Aorta (tissue), 5 donors: ENCODE measurements at regions of chr1 and their contacts with region 1.

Region 1: DNA sequence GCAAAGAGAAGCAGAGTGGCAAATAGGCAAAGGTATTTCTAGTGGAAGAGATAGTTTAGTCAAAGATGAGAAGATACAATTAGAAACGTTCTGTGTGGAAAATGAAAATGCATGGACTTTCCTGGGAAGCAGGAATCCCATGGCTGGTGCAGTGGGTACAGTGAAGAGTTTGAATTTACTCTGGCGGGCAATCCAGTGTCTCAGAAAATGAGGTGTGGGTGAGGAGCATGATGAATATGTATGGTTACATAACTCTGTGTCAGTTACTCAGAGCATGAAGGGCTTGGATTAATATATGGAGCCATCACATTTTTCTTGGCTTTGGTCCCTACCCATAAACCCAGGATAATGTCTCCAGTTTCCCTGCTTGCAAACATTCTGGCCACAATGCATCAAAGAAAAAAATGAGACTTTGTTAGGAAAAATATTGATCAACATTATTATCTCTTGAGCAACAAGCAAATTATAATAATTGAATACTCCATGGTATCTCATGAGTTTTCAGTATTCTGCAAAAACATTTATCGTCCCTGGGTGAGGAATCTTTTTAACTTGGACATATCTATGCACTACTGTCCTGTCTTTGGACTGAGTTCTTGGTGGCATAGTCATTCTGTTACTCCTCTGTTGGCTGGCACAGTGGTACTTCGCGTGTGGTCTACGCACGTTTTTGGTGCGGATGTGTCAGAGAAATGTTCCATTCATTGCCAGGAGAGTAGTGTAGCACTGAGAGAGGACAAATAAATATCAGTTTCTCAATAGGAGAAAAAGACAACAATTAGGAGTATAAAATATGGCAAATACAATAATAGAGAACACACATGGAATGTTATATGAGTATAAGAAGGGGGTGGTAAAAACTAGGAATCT is 173.7 kb upstream of the C1orf105 start:
- DNase-seq: no peak
- ATAC-seq: no peak
- H3K4me3 ChIP-seq: no peak overlapping the region
- H3K27ac ChIP-seq: no peak overlapping the region
- H3K4me1 ChIP-seq: no peaks in the 10 kb centered on the region
- H3K27me3 ChIP-seq: no peaks in the 10 kb centered on the region

Region 2: GRCh38 chr1:172041742-172042141 is 205.0 kb before region 1 on chr1:
- intact Hi-C with region 1: no loop called
- DNase-seq: no peak
- ATAC-seq: peak; percentile 75
- H3K4me3 ChIP-seq: no peak overlapping the region
- H3K27ac ChIP-seq: no peak overlapping the region
- H3K4me1 ChIP-seq: no peaks in the 10 kb centered on the region
- H3K27me3 ChIP-seq: no peaks in the 10 kb centered on the region

Region 3: DNA sequence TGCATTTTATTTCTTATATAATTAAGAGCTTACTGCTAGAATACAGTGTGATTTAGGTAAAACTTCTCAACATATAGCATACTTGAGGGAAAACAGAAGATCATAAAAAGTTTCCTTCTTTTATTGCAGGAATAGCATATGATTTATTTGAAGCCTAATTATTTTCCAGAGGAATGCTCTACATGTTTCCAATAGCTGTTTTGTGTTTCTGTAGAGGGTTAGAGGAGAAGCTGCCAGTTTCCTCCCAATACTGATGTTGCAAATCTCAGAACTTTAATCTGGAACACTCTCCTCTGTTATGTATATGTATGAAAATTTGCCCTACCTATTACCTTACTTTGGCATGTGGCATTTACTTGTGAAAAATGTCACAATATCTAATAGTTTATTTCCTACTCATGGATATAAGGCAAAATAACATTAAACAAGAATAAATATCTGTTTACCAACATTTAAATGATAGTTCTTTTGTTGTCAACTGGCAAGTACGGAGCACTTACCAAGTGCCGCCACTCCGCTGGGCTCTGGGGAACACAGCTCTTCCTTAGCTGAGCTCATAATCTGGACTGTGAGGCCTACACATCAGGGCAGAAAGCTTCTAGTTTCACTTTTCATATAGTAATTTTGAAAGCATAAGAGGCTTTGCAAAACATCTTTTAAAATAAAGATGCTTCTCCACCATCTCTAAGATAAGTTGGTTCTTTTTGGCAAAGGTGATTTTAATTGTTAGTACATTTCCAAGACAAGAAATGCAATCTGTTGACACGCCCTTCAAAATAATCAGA is 66.1 kb before region 1 on chr1:
- intact Hi-C with region 1: loop called in 1 of 2 experiments (anchors 5 kb)
- DNase-seq: peak; percentile 71 to 76
- ATAC-seq: peak; percentile 82
- H3K4me3 ChIP-seq: peak overlapping the region; percentile 14 to 59
- H3K27ac ChIP-seq: peak overlapping the region; percentile 63 to 93
- H3K4me1 ChIP-seq: peaks cover 0 to 3% of the 10 kb centered on the region in 2 donors
- H3K27me3 ChIP-seq: no peaks in the 10 kb centered on the region

Region 4: GRCh38 chr1:172286629-172287076 is 39.9 kb after region 1 on chr1:
- intact Hi-C with region 1: no loop called
- DNase-seq: peak in 1 of 2 donors; percentile 49
- ATAC-seq: peak; percentile 60
- H3K4me3 ChIP-seq: no peak overlapping the region
- H3K27ac ChIP-seq: peak overlapping the region in 1 of 2 donors; percentile 51
- H3K4me1 ChIP-seq: peaks cover 0 to 3% of the 10 kb centered on the region in 2 donors
- H3K27me3 ChIP-seq: no peaks in the 10 kb centered on the region